RWPE1 (cell line): ENCODE measurements at regions of chr20 and their contacts with region 1.

Region 1: GRCh38 chr20:13819885-13820645 is 35.2 kb downstream of the NDUFAF5 start:
- DNase-seq: peak; percentile 79
- H3K27ac ChIP-seq: no peak overlapping the region
- CTCF ChIP-seq: peak; percentile 81

Region 2: DNA sequence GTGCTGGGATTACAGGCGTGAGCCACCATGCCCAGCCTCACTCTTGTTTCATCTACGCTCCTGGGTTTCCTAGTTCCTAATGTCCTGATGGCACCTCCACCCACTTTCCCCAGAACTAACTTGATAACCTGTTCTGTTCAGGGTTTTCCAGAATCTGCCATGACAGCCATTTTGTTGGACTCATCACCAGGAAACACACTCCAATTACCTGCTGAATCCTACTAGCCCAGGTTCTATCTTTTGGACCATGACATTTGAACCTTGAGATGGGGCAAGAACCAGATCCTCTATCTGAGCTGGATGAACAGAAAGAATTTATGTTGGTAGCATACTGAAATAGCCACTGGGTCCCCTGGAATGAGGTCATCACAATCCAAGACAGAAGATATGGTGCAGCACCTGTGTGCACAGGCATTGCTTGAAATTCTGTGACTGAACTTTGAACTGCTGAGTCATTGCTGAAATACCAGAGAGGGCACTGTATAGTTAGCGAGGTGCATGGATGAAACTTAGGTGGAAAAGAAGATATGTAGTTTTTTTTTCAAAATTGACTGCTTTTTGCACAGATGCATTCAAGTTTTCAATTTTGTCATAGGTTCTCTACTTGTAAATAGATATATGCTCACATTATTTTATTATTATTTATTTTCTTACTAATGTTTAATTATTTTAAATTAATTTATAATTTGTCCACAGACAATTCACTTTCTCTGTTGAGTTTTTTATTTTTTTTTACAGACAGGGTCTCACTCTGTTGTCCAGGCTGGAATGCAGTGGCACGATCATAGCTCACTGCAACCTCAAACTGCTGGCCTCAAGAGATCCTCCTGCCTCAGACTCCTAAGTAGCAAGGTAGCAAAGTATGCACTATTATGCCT is 138.6 kb before region 1 on chr20:
- CTCF ChIA-PET with region 1: no interaction called
- POLR2A ChIA-PET with region 1: no interaction called
- DNase-seq: no peak
- H3K27ac ChIP-seq: no peak overlapping the region
- CTCF ChIP-seq: no peak

Region 3: DNA sequence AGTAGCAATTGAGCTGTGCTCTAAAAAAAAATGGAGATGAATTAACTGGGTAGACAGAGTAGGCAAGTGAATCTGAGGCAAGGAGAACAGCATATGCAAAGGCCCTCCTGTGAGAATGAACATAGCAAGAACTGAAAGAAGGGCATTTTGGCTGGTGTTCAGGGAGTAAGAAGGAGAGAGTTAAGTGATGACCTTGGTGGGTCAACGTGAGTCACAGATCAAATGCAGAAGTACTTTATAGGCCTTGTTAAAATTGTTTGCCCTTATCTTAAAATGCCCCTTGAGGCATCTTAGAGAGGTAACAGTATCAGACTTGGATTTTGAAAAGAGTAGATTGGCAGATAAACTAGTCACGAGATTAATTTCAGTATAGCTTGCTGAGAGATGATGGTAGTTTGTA is 10.7 kb before region 1 on chr20:
- CTCF ChIA-PET with region 1: no interaction called
- POLR2A ChIA-PET with region 1: no interaction called
- DNase-seq: no peak
- H3K27ac ChIP-seq: no peak overlapping the region
- CTCF ChIP-seq: no peak

Region 4: DNA sequence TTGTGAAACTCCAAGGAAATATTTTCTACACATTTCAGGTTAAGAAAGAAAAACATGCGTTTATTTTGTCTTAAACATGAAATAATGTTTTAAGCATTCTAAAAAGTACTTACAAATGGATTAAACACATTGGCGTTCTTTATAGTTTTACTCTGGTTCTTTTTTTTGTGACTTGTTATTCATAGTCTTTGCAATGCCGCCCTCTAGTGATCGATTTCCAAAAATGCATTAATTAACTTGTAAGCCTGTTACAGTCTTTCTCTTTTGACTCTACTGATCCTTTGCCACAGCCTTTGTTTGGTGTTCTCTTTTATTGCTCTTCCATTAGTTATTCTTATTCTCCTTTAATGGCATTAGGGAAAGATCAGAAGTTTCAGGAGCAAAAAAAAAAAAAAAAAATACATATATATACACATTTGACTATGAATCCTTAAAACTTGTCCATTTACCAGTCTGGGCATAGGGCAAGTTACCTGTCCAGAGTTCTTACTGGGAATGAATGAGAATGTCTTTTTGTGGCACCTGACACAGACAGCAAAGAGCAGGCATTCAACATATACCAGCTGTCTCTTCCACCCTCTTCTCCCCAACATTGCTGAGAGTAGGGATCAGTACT is 235.2 kb after region 1 on chr20:
- CTCF ChIA-PET with region 1: interaction called, 10 read pairs
- POLR2A ChIA-PET with region 1: no interaction called
- DNase-seq: peak; percentile 18
- H3K27ac ChIP-seq: no peak overlapping the region
- CTCF ChIP-seq: peak; percentile 75